ENCODE measurements at regions of chr20 and their contacts with region 1.

Region 1: GRCh38 chr20:21505161-21505809 is 8.6 kb downstream of the NKX2-2 start:
- DNase-seq: peak; percentile 48
- H3K4me3 ChIP-seq: peak overlapping the region; percentile 60
- H3K27ac ChIP-seq: no peak overlapping the region
- H3K4me1 ChIP-seq: peaks cover 28% of the 10 kb centered on the region
- H3K27me3 ChIP-seq: peaks cover 100% of the 10 kb centered on the region
- CTCF ChIP-seq: peak; percentile 96

Region 2: DNA sequence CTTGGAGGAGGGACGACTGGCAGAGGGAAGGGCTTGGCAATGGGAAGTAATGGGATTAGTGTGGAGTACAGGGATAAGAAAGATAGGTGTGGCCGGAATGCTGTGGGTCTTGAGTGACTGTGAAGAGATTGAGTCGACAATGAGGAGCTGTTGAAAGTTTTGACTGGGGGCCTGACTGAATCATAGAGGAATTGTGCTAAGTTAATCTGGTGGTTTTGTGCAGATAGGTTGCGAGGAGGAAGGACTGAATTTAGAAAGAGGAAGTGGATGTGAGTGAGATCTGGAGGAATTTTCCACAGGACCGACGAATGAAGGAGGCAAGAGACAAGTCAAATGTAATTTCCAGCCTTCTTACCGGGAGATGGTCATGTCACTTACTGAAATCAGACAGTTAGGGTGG is 649.0 kb before region 1 on chr20:
- intact Hi-C with region 1: loop called (anchors 10 kb)
- DNase-seq: no peak
- H3K4me3 ChIP-seq: no peak overlapping the region
- H3K27ac ChIP-seq: no peak overlapping the region
- H3K4me1 ChIP-seq: no peaks in the 10 kb centered on the region
- H3K27me3 ChIP-seq: peaks cover 77% of the 10 kb centered on the region
- CTCF ChIP-seq: no peak

Region 3: DNA sequence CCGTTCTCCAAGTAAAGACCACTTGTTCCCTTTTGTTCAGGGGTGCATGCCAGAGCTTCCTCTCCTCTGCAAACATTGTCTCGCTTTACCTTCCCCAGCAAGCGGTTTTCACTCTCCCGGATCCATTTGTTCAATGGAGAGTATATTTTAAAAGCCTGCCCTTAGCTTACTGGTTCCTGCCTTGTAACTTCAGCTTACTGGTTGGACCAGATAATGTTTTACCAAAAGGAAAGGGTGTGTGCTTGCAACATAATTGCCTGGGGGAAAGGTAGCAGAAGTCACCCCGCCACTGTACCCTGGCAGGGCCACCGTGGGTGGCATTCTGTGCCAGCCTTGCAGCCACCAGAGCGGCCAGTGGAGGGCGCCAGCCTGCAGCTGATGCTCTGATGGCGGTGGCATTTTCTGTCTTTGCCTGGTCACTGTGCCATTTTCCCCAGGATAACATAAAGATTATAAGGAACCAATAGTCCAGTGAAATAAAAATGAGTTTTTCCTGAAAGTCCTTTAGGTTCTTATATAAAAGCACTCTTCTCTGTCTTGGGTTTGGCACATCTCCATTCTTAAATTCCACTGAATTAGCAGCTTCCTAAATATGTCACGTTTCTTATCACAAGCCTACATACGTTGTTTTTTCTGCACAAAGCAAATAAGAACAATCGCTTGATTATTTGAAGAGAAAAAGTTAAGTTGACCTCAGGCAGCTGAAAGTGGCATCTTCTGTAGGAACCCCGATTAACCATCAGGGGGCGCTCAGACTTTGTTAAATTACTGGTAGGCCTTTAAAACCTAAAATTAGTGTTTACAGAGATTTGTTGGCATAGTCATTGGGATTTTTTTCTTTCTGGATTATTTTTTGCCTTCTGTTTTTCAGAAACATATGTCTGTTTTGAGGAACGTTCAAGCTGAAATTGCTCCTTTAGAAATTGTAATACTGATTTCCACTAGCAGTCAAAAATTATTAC is 269.5 kb before region 1 on chr20:
- intact Hi-C with region 1: loop called (anchors 5 kb)
- DNase-seq: peak; percentile 48
- H3K4me3 ChIP-seq: no peak overlapping the region
- H3K27ac ChIP-seq: no peak overlapping the region
- H3K4me1 ChIP-seq: peaks cover 14% of the 10 kb centered on the region
- H3K27me3 ChIP-seq: no peaks in the 10 kb centered on the region
- CTCF ChIP-seq: peak; percentile 82

Region 4: DNA sequence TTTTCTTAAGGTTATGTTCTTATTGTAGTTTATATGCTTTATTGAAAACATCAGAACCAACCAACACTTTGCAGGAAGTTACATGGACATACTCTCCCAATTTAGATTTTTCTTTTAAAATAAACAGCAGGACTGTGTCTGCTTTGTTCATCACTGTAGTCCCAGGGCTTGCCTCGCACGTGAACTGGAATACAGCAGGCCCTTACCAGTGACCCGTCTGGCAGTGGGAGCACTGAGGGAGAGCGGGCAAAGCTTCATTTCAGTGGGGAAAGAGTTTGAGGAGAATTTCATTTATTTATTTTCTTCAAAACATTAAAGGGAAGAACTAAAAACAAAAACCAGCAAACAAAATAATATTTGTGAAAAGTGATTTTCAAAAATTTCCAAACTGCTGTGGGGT is 431.0 kb after region 1 on chr20:
- intact Hi-C with region 1: no loop called
- DNase-seq: no peak
- H3K4me3 ChIP-seq: no peak overlapping the region
- H3K27ac ChIP-seq: no peak overlapping the region
- H3K4me1 ChIP-seq: no peaks in the 10 kb centered on the region
- H3K27me3 ChIP-seq: no peaks in the 10 kb centered on the region
- CTCF ChIP-seq: no peak